Activated CD4-positive, alpha-beta T cell treated with anti-CD3 and anti-CD28 coated beads, Interleukin-2, amount 10 ng/mL, durations not matched to agents 7 days and 5 days (primary cell): ENCODE measurements at regions of chr2 and their contacts with region 1.

Region 1: GRCh38 chr2:113058986-113059960 is at the start of gene IL36RN:
- DNase-seq: no peak
- H3K4me3 Mint-ChIP-seq: no peak within 1 kb of the TSS
- H3K27ac Mint-ChIP-seq: no peak within 1 kb of the TSS
- H3K4me1 Mint-ChIP-seq: no peaks in the 10 kb centered on the region
- H3K27me3 Mint-ChIP-seq: no peaks in the 10 kb centered on the region
- total RNA-seq, gene IL36RN: not detected

Region 2: DNA sequence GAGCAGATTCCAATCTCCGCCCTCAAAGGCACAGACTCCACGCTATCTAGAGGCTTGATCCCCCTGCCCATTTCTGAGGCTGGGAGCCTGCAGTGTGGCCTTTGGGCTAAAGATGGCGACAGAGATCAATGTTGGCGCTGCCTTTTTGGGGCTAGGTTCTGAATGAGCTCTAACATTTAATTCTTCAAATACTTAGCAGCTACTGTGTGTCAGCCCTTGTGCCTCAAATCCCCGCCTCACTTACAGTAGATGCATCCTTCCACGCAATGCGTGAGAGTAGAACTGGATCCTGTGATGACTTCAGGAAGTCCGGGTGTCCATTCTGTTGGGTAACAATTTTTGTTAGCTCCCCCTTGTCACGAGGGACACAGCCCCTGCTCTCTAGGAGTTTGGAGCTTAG is 20.9 kb after region 1 on chr2:
- CTCF ChIA-PET with region 1: interaction called, 10 read pairs
- POLR2A ChIA-PET with region 1: no interaction called
- DNase-seq: peak; percentile 59
- H3K4me3 Mint-ChIP-seq: no peak overlapping the region
- H3K27ac Mint-ChIP-seq: no peak overlapping the region
- H3K4me1 Mint-ChIP-seq: peaks cover 2% of the 10 kb centered on the region
- H3K27me3 Mint-ChIP-seq: peaks cover 16% of the 10 kb centered on the region